OCI-LY7 (cell line): ENCODE measurements at regions of chr17 and their contacts with region 1.

Region 1: DNA sequence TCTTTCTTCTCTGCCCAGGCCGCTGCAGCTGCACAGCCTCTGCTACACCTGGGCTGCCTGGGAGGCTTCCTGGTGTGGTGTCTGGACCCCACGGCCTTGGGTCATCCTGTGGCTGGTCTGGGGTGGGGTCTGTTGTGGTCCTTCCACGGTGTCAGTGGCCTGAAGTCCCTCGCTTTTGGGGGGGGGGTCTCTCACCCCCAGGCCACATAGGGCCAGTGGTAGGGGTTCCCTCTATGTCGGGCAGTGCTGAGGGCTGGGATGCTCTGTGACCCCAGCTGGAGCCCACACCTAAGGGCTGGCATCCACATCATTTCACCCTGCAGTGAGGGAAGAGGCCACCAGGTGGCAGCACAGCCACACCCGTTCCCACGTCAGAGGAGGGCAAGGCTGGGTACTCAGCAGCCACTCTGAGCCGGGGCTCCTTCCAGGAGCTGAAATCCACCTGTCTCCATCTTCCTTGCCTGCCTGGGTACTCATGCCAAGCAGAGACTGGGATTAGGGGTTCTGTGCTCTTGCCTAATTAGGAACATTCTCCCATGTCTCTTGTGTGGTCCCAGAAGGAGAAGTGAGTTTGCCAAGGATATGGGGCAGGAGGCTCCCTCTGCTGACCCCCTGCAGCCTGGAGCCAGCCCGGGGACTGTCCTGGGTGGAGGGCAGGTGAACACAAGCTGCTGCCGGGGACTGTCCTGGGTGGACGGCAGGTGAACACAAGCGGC is 13.0 kb downstream of the ENGASE start:
- DNase-seq: peak; percentile 74
- H3K4me3 ChIP-seq: no peak overlapping the region
- H3K27ac ChIP-seq: no peak overlapping the region
- H3K4me1 ChIP-seq: no peaks in the 10 kb centered on the region
- CTCF ChIP-seq: peak; percentile 97

Region 2: GRCh38 chr17:79126139-79126538 is 38.6 kb after region 1 on chr17:
- CTCF ChIA-PET with region 1: no interaction called
- POLR2A ChIA-PET with region 1: no interaction called
- intact Hi-C with region 1: loop called (anchors 2 kb)
- DNase-seq: peak; percentile 11
- H3K4me3 ChIP-seq: no peak overlapping the region
- H3K27ac ChIP-seq: no peak overlapping the region
- H3K4me1 ChIP-seq: no peaks in the 10 kb centered on the region
- CTCF ChIP-seq: peak; percentile 48

Region 3: GRCh38 chr17:79188048-79188447 is 100.5 kb after region 1 on chr17:
- CTCF ChIA-PET with region 1: no interaction called
- POLR2A ChIA-PET with region 1: no interaction called
- intact Hi-C with region 1: loop called (anchors 5 kb)
- DNase-seq: peak; percentile 61
- H3K4me3 ChIP-seq: no peak overlapping the region
- H3K27ac ChIP-seq: no peak overlapping the region
- H3K4me1 ChIP-seq: no peaks in the 10 kb centered on the region
- CTCF ChIP-seq: peak; percentile 84

Region 4: DNA sequence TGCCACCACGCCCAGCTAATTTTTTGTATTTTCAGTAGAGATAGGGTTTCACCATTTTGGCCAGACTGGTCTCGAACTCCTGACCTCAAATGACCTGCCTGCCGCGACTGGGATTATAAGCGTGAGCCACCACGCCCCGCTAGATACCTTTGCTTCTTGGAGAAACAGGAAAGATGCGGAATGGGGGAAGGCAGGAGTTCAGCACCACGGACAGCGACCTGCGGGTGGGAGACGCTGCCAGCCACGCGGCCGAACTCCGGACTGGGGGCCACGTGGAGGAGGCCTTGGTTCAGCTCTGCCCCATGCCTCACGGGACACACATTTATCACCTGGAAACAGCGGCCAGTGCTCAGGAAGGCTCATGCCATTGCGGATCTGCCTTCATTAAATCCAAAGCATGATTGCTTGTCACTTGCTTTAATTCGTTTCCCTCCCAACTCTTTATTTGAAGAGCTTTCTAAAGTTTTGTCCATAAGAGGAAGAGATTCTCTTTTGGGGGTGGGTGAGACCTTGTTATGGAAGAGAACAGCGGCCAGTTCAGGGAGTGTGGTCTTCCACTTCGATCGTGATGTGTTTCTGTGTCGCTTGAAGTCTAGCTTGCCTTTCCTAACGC is 207.0 kb after region 1 on chr17:
- CTCF ChIA-PET with region 1: no interaction called
- POLR2A ChIA-PET with region 1: no interaction called
- intact Hi-C with region 1: loop called (anchors 2 kb)
- DNase-seq: peak; percentile 31
- H3K4me3 ChIP-seq: no peak overlapping the region
- H3K27ac ChIP-seq: no peak overlapping the region
- H3K4me1 ChIP-seq: peaks cover 6% of the 10 kb centered on the region
- CTCF ChIP-seq: no peak

Region 5: DNA sequence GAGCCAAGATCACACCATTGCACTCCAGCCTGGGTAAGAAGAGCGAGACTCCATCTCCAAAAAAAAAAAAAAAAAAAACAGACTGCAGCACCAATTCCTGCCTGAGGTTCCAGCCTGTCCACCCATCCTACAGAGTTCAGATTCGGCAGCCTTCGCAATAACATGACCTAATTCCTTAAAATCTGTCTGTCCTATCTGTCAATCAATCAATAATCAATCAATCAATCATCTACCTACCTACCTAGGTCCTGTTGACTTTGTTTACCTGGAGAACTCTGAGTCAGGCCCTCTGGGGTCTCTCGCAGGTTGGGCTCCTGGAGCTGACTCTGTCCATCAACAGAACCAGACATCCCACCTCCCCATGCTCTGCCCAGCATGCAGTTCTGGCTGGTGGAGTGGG is 223.8 kb after region 1 on chr17:
- CTCF ChIA-PET with region 1: no interaction called
- POLR2A ChIA-PET with region 1: no interaction called
- intact Hi-C with region 1: no loop called
- DNase-seq: no peak
- H3K4me3 ChIP-seq: no peak overlapping the region
- H3K27ac ChIP-seq: no peak overlapping the region
- H3K4me1 ChIP-seq: peaks cover 38% of the 10 kb centered on the region
- CTCF ChIP-seq: no peak